ENCODE measurements at regions of chr15 and their contacts with region 1.

Region 1: GRCh38 chr15:89206908-89207331 is 14.5 kb downstream of the RLBP1 start:
- DNase-seq: peak; percentile 56
- ATAC-seq: peak; percentile 96
- H3K4me3 ChIP-seq: peak overlapping the region; percentile 15 to 51 (median 30); a peak in 4 of 6 replicates
- H3K27ac ChIP-seq: no peak overlapping the region
- H3K4me1 ChIP-seq: peaks cover 14% of the 10 kb centered on the region
- H3K27me3 ChIP-seq: no peaks in the 10 kb centered on the region
- CTCF ChIP-seq: peak; percentile 94
- EP300 ChIP-seq: no peak
- POLR2A ChIP-seq: no peak
- RAD21 ChIP-seq: peak; percentile 83

Region 2: GRCh38 chr15:89068325-89068784 is 138.6 kb before region 1 on chr15:
- CTCF ChIA-PET with region 1: no interaction called
- POLR2A ChIA-PET with region 1: no interaction called
- in situ Hi-C with region 1: no loop called
- intact Hi-C with region 1: no loop called
- DNase-seq: no peak
- ATAC-seq: no peak
- H3K4me3 ChIP-seq: no peak overlapping the region
- H3K27ac ChIP-seq: no peak overlapping the region
- H3K4me1 ChIP-seq: peaks cover 32% of the 10 kb centered on the region
- H3K27me3 ChIP-seq: peaks cover 0 to 1% of the 10 kb centered on the region in 2 experiments; a peak in 1 of 5 replicates
- CTCF ChIP-seq: no peak
- EP300 ChIP-seq: no peak
- POLR2A ChIP-seq: no peak
- RAD21 ChIP-seq: no peak

Region 3: GRCh38 chr15:89299896-89300295 is 93.0 kb after region 1 on chr15:
- CTCF ChIA-PET with region 1: no interaction called
- POLR2A ChIA-PET with region 1: no interaction called
- in situ Hi-C with region 1: loop called (anchors 10 kb)
- intact Hi-C with region 1: loop called (anchors 10 kb)
- DNase-seq: no peak
- ATAC-seq: peak; percentile 33; the same call in 1 of the 3 replicates
- H3K4me3 ChIP-seq: no peak overlapping the region
- H3K27ac ChIP-seq: no peak overlapping the region
- H3K4me1 ChIP-seq: no peaks in the 10 kb centered on the region
- H3K27me3 ChIP-seq: no peaks in the 10 kb centered on the region; a peak in 1 of 5 replicates
- CTCF ChIP-seq: peak; percentile 34
- EP300 ChIP-seq: no peak
- POLR2A ChIP-seq: no peak
- RAD21 ChIP-seq: no peak

Measured in HepG2 (cell line).